Psoas muscle (tissue), 8 donors: ENCODE measurements at regions of chr1 and their contacts with region 1.

Region 1: GRCh38 chr1:26705788-26706311 is 10.0 kb downstream of the ARID1A start:
- DNase-seq: no peak
- ATAC-seq: peak in 3 of 4 donors; percentile 42 to 55 (median 53)
- H3K4me3 ChIP-seq: peak overlapping the region; percentile 30
- H3K27ac ChIP-seq: peak overlapping the region; percentile 69
- H3K4me1 ChIP-seq: peaks cover 64% of the 10 kb centered on the region
- H3K27me3 ChIP-seq: no peaks in the 10 kb centered on the region
- CTCF ChIP-seq: no peak

Region 2: DNA sequence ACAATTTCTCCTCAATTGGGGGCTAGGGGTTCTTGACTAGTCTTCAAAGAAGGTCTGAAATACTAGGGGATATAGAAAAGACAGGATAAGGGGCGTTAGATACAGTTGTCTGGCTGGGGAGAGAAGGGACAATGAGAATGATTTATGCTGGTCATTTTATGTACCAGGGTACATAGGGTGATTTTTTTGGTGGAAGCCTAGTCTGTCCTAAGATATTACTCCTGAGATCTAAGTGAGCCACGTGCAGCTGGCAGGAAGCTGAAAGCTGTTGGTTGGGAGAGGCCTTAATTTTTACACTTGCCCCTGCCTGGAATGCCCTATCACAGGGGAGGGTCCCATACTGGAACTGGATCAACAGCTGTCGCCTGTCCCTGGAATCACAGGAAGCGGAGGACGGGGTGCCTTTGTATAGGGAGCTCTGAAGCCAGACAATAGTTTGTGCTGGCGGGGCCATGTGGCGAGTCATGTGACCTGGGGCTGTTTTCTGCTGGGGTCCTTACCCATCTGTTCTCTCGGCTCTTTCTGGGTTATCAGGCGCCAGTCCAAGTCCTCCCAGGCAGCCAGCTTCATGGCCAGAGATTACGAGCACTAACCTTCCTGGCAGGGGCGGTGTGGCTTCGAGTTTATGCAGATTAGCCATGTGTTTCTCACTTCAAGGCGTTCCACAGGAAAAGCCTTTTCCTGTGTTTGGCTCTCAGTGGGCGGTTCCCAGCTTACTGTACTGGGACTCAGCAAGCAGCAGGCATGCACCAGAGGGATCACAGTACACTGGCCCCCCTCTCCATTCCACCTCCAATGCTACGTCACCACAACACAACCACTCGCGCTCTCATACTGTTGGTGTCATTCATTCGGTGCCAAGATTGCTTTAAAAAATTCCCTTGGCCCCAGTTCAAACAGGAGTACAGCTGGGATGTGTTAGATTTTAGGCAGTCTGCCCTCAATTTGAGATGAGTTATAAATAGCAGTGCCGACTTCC is 17.5 kb after region 1 on chr1:
- intact Hi-C with region 1: loop called in 1 of 2 experiments (anchors 2 kb)
- DNase-seq: peak; percentile 77 to 84
- ATAC-seq: peak; percentile 87 to 89 (median 88)
- H3K4me3 ChIP-seq: peak overlapping the region; percentile 20
- H3K27ac ChIP-seq: peak overlapping the region; percentile 54
- H3K4me1 ChIP-seq: peaks cover 73% of the 10 kb centered on the region
- H3K27me3 ChIP-seq: no peaks in the 10 kb centered on the region
- CTCF ChIP-seq: no peak

Region 3: GRCh38 chr1:26754086-26754874 is 48.4 kb after region 1 on chr1:
- intact Hi-C with region 1: no loop called
- DNase-seq: no peak
- ATAC-seq: peak in 2 of 4 donors; percentile 39 to 51
- H3K4me3 ChIP-seq: no peak overlapping the region
- H3K27ac ChIP-seq: peak overlapping the region; percentile 56
- H3K4me1 ChIP-seq: peaks cover 46% of the 10 kb centered on the region
- H3K27me3 ChIP-seq: no peaks in the 10 kb centered on the region
- CTCF ChIP-seq: no peak

Region 4: GRCh38 chr1:26768755-26769154 is 62.9 kb after region 1 on chr1:
- intact Hi-C with region 1: loop called in 1 of 2 experiments (anchors 10 kb)
- DNase-seq: peak in 1 of 2 donors; percentile 57
- ATAC-seq: peak; percentile 42 to 58 (median 50)
- H3K4me3 ChIP-seq: no peak overlapping the region
- H3K27ac ChIP-seq: peak overlapping the region; percentile 47
- H3K4me1 ChIP-seq: peaks cover 45% of the 10 kb centered on the region
- H3K27me3 ChIP-seq: no peaks in the 10 kb centered on the region
- CTCF ChIP-seq: no peak

Region 5: GRCh38 chr1:26799479-26800142 is 93.8 kb after region 1 on chr1:
- intact Hi-C with region 1: no loop called
- DNase-seq: peak; percentile 66 to 83
- ATAC-seq: peak; percentile 88 to 91 (median 90)
- H3K4me3 ChIP-seq: peak overlapping the region; percentile 22
- H3K27ac ChIP-seq: peak overlapping the region; percentile 79
- H3K4me1 ChIP-seq: peaks cover 40% of the 10 kb centered on the region
- H3K27me3 ChIP-seq: no peaks in the 10 kb centered on the region
- CTCF ChIP-seq: no peak

Region 6: GRCh38 chr1:27071049-27071416 is 365.2 kb after region 1 on chr1:
- intact Hi-C with region 1: no loop called
- DNase-seq: no peak
- ATAC-seq: peak in 1 of 4 donors; percentile 35
- H3K4me3 ChIP-seq: no peak overlapping the region
- H3K27ac ChIP-seq: no peak overlapping the region
- H3K4me1 ChIP-seq: no peaks in the 10 kb centered on the region
- H3K27me3 ChIP-seq: peaks cover 0 to 4% (median 0%) of the 10 kb centered on the region in 3 donors
- CTCF ChIP-seq: no peak